Activated naive CD4-positive, alpha-beta T cell treated with anti-CD3 and anti-CD28 coated beads, Interleukin-2, amount 10 ng/mL, durations not matched to agents 7 days and 5 days (primary cell): ENCODE measurements at regions of chr10 and their contacts with region 1.

Region 1: GRCh38 chr10:49407552-49408137 is 11.8 kb upstream of the DRGX start:
- DNase-seq: peak; percentile 84
- H3K4me3 Mint-ChIP-seq: no peak overlapping the region
- H3K27ac Mint-ChIP-seq: no peak overlapping the region
- H3K4me1 Mint-ChIP-seq: no peaks in the 10 kb centered on the region
- H3K27me3 Mint-ChIP-seq: peaks cover 84% of the 10 kb centered on the region

Region 2: DNA sequence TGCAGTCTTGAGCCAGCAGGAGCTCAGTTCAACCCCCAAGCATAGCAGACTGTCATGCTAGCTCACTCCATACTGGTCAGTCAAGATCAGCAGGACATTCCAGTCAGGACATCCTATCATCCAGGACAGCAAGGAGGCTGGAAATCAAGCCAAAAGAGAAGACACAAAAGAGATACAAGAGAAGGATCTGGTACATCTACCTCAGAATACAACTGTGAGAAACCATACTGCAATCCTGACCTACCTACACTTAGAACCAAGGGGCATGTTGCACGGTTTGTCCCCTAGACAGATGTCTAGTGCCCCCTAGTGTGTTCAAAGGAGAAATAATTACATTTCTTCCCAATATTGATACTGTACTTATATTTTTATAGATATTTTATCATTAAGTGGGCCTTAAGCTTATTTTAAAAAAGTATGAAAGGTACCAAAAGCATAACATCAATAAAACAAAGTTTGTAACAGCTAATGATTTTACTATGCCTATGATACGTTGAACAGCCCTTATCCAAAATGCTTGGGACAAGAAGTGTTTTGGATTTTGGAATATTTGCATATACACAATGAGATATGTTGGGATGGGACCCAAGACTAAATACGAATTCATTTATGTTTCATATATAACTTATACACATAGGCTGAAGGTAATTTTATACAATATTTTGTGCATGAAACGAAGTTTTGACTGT is 104.6 kb after region 1 on chr10:
- CTCF ChIA-PET with region 1: interaction called, 176 read pairs
- DNase-seq: peak; percentile 34
- H3K4me3 Mint-ChIP-seq: no peak overlapping the region
- H3K27ac Mint-ChIP-seq: no peak overlapping the region
- H3K4me1 Mint-ChIP-seq: peaks cover 22% of the 10 kb centered on the region
- H3K27me3 Mint-ChIP-seq: peaks cover 26% of the 10 kb centered on the region

Region 3: GRCh38 chr10:49518982-49519578 is 111.4 kb after region 1 on chr10:
- CTCF ChIA-PET with region 1: interaction called, 176 read pairs
- DNase-seq: peak; percentile 50
- H3K4me3 Mint-ChIP-seq: no peak overlapping the region
- H3K27ac Mint-ChIP-seq: no peak overlapping the region
- H3K4me1 Mint-ChIP-seq: no peaks in the 10 kb centered on the region
- H3K27me3 Mint-ChIP-seq: no peaks in the 10 kb centered on the region